T-cell (primary cell): ENCODE measurements at regions of chr2 and their contacts with region 1.

Region 1: DNA sequence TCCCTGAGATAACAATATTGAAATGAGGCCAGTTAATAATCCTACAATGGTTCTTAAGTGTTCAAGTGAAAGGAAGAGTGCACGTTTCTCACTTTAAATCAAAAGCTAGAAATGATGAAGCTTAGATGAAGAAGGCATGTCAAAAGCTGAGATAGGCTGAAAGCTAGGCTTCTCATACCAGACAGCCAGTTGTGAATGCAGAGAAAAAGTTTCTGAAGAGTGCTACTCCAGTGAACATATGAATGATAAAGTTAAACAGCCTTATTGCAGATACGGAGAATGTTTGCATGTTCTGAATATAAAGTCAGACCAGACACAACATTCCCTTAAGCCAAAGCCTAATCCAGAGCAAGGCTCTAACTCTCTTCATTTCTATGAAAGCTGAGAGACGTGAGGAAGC is 51.4 kb downstream of the EML4 start:
- DNase-seq: no peak
- ATAC-seq: peak in 1 of 4 experiments; percentile 23
- H3K4me3 ChIP-seq: no peak overlapping the region
- H3K4me3 Mint-ChIP-seq: peak overlapping the region in 2 of 3 donors; percentile 13 to 33
- H3K27ac ChIP-seq: peak overlapping the region; percentile 26
- H3K27ac Mint-ChIP-seq: peak overlapping the region; percentile 60 to 81
- H3K4me1 ChIP-seq: peaks cover under 1 to 31% of the 10 kb centered on the region in 2 experiments
- H3K4me1 Mint-ChIP-seq: peaks cover 87 to 88% (median 87%) of the 10 kb centered on the region in 3 donors
- H3K27me3 ChIP-seq: no peaks in the 10 kb centered on the region
- H3K27me3 Mint-ChIP-seq: no peaks in the 10 kb centered on the region

Region 2: DNA sequence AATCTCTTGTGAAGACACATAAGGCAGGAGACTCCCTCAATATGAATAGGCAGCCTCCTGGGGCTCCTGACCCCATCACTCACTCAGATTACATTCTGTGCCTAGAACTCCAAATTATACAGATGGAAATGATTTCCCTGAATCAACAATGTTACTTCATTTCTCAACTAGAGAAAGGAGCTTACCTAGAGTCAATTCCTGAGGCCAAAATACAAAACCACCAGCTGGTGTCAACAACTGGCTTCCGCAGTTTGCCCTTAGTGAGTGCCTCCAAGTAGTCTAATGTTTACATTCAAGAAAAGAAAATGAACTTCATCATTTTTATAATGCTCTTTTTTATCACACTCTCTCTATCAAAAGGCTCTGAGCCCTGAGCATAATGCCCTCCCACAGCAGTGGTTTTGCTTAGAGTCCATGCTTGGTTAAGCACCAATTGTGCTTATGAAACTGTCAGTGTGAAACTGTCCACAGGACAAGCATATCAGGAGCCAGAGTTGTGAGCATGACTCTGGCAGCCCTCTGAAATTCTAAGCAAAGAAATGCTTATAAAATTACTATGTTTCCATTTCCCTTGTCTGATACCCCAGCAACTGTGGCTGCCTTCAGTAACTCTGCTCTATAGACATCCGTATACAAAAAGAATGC is 478.5 kb before region 1 on chr2:
- CTCF ChIA-PET with region 1: no interaction called
- POLR2A ChIA-PET with region 1: no interaction called
- DNase-seq: no peak
- ATAC-seq: no peak
- H3K4me3 ChIP-seq: no peak overlapping the region
- H3K4me3 Mint-ChIP-seq: no peak overlapping the region
- H3K27ac ChIP-seq: no peak overlapping the region
- H3K27ac Mint-ChIP-seq: no peak overlapping the region
- H3K4me1 ChIP-seq: no peaks in the 10 kb centered on the region
- H3K4me1 Mint-ChIP-seq: no peaks in the 10 kb centered on the region
- H3K27me3 ChIP-seq: no peaks in the 10 kb centered on the region
- H3K27me3 Mint-ChIP-seq: peaks cover 2 to 8% of the 10 kb centered on the region in 2 donors

Region 3: GRCh38 chr2:42025151-42025582 is 195.4 kb before region 1 on chr2:
- CTCF ChIA-PET with region 1: no interaction called
- POLR2A ChIA-PET with region 1: no interaction called
- DNase-seq: no peak
- ATAC-seq: no peak
- H3K4me3 ChIP-seq: no peak overlapping the region
- H3K4me3 Mint-ChIP-seq: no peak overlapping the region
- H3K27ac ChIP-seq: no peak overlapping the region
- H3K27ac Mint-ChIP-seq: no peak overlapping the region
- H3K4me1 ChIP-seq: peaks cover 0 to 6% of the 10 kb centered on the region in 2 experiments
- H3K4me1 Mint-ChIP-seq: peaks cover 0 to 4% (median 2%) of the 10 kb centered on the region in 3 donors
- H3K27me3 ChIP-seq: peaks cover 0 to 29% of the 10 kb centered on the region in 2 experiments
- H3K27me3 Mint-ChIP-seq: peaks cover 10 to 36% of the 10 kb centered on the region in 2 donors

Region 4: DNA sequence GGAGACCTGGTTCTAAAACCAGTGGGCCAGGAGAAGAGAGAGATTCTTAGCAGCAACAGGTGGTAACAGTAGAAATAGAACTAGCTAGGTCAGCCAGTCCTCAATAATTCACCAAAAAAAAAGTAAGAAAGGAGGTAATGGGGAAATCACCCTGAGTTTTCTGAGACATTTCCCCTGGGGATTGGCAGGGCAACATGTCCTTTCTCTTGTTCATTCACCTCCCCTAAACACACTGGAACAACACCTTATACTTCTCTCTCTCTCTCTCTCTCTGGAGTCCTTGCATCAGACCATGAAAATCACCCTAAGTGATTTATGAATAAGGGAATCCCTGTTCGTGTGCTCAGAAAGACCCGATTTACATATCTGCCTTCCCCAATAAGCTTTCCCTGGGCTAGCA is 75.7 kb after region 1 on chr2:
- CTCF ChIA-PET with region 1: no interaction called
- POLR2A ChIA-PET with region 1: interaction called in 1 of 2 experiments, 14 read pairs
- DNase-seq: peak in 1 of 35 experiments; percentile 30
- ATAC-seq: no peak
- H3K4me3 ChIP-seq: no peak overlapping the region
- H3K4me3 Mint-ChIP-seq: peak overlapping the region in 2 of 3 donors; percentile 14 to 61
- H3K27ac ChIP-seq: peak overlapping the region; percentile 71
- H3K27ac Mint-ChIP-seq: peak overlapping the region; percentile 89 to 99
- H3K4me1 ChIP-seq: peaks cover 20 to 26% of the 10 kb centered on the region in 2 experiments
- H3K4me1 Mint-ChIP-seq: peaks cover 58 to 72% (median 65%) of the 10 kb centered on the region in 3 donors
- H3K27me3 ChIP-seq: no peaks in the 10 kb centered on the region
- H3K27me3 Mint-ChIP-seq: no peaks in the 10 kb centered on the region

Region 5: DNA sequence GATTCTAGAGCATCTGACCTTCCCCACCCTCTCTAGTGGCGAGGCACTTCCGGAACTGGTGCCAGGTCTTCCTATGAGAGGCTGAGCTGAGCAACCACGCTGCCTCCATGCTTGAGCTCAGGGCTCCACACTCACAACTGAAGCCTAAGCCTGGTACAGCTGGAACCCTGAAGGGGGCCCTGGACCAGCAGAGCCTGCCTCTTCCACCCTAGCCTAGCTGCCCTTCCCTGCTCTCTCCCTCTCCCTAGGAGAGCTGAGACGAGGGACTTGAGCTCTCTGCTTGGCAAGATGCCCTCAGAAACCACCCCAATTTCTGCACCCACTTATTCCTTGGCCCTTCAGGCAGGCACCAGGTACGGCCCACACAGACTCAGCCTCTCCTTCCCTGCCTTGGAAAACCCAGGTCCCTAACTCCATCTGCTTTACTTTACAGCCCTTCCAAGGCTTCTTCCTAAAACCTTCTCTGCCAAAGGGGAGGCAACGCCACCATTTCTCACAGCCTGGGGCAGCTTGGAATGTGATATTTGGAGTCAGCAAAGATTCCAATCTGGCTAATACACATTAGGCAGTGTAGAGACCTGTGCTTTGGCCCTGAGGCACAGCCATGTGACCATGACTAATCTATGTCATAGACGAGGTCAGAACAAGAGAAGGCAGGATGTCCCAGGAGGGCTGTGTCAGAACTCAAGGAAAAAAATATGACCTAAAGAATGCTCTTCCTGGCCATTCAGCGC is 121.7 kb after region 1 on chr2:
- CTCF ChIA-PET with region 1: no interaction called
- POLR2A ChIA-PET with region 1: interaction called, 3 to 11 read pairs
- DNase-seq: no peak
- ATAC-seq: peak in 2 of 4 experiments; percentile 19 to 24
- H3K4me3 ChIP-seq: no peak overlapping the region
- H3K4me3 Mint-ChIP-seq: no peak overlapping the region
- H3K27ac ChIP-seq: no peak overlapping the region
- H3K27ac Mint-ChIP-seq: peak overlapping the region; percentile 60 to 76
- H3K4me1 ChIP-seq: peaks cover 0 to 19% of the 10 kb centered on the region in 2 experiments
- H3K4me1 Mint-ChIP-seq: peaks cover 30 to 41% (median 36%) of the 10 kb centered on the region in 3 donors
- H3K27me3 ChIP-seq: no peaks in the 10 kb centered on the region
- H3K27me3 Mint-ChIP-seq: no peaks in the 10 kb centered on the region